Activated T-helper 2 cell treated with anti-CD3 and anti-CD28 coated beads, Interferon-gamma antibody, Interleukin-2, Interleukin-4, amounts not matched to agents 10 μg/mL and 5 μg/mL and 100 μg/mL, durations not matched to agents 14 hours and 24 hours and 36 hours (primary cell): ENCODE measurements at regions of chr18 and their contacts with region 1.

Region 1: GRCh38 chr18:63320046-63320689 is 599 bp upstream of the BCL2 start:
- DNase-seq: peak; percentile 84
- H3K4me3 Mint-ChIP-seq: peak overlapping the region; percentile 80
- H3K27ac Mint-ChIP-seq: peak overlapping the region; percentile 86
- H3K4me1 Mint-ChIP-seq: peaks cover 27% of the 10 kb centered on the region
- H3K27me3 Mint-ChIP-seq: no peaks in the 10 kb centered on the region

Region 2: GRCh38 chr18:62844850-62845643 is 475.1 kb before region 1 on chr18:
- intact Hi-C with region 1: loop called (anchors 10 kb)
- DNase-seq: peak; percentile 20
- H3K4me3 Mint-ChIP-seq: peak overlapping the region; percentile 70
- H3K27ac Mint-ChIP-seq: peak overlapping the region; percentile 90
- H3K4me1 Mint-ChIP-seq: peaks cover 54% of the 10 kb centered on the region
- H3K27me3 Mint-ChIP-seq: no peaks in the 10 kb centered on the region

Region 3: DNA sequence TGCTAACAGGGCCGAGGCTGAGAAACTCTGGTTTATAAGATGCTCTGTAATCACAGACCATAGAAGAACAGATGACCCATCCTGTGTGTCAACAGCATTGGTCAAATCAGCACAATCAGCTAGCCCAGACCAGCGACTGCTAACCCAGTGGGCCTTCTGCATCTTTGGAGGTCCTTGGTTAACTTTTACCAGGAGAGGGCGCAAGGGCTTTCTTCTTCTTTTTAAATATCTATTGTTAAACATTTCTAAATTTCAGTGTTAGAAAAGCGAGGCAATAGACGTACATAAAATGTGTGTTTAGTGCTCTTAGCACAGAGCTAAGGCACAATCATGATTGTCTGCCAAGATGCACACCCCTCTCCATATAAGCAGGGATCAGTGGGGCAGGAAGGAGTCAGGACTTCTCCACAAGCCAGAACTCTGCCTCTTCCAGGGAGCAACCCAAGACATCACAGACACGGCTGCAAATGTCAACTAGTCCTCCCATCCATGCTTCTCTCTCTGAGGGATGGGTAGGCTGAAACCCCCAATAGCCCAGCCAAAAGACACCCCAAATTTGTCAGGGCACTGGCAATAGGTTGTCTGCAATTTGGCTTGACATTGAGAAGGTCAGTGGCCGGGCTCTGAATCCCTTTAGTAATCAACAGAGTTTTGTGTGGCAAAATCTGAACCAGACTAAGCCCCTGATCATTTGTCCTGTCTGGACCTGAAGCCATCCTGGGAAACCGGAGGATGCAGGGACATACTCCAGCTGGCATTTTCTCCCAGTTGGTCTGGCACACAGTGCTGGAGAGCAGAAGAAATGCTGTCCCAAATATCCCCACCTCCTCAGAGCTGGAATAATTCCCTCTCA is 188.8 kb before region 1 on chr18:
- intact Hi-C with region 1: loop called (anchors 1 kb)
- DNase-seq: no peak
- H3K4me3 Mint-ChIP-seq: no peak overlapping the region
- H3K27ac Mint-ChIP-seq: no peak overlapping the region
- H3K4me1 Mint-ChIP-seq: peaks cover 37% of the 10 kb centered on the region
- H3K27me3 Mint-ChIP-seq: no peaks in the 10 kb centered on the region

Region 4: DNA sequence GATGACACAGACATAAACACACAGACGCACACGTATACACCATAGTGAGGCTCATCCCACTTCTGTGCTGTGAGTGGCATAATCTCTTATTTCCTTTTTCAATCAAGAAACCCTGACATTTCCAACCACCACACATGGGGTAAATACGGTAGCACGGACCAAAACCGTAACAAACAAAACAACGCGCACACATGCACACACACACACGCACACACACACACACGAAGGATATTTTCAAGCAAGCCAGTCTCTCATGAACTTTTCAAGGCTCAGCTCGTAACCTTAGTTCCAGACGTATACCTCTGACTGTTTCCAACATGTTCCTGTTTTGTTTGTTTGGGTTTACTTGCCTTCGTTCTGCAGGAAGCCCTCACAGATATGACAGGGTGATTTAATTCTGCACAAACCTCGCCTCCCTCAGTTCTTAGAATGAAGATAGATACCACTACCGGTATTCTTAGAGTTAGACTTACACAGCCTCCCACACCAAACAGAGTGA is 120.4 kb before region 1 on chr18:
- intact Hi-C with region 1: loop called (anchors 1 kb)
- DNase-seq: peak; percentile 56
- H3K4me3 Mint-ChIP-seq: no peak overlapping the region
- H3K27ac Mint-ChIP-seq: no peak overlapping the region
- H3K4me1 Mint-ChIP-seq: peaks cover 30% of the 10 kb centered on the region
- H3K27me3 Mint-ChIP-seq: no peaks in the 10 kb centered on the region

Region 5: GRCh38 chr18:63253428-63254372 is 66.5 kb before region 1 on chr18:
- intact Hi-C with region 1: no loop called
- DNase-seq: no peak
- H3K4me3 Mint-ChIP-seq: peak overlapping the region; percentile 5
- H3K27ac Mint-ChIP-seq: peak overlapping the region; percentile 52
- H3K4me1 Mint-ChIP-seq: peaks cover 60% of the 10 kb centered on the region
- H3K27me3 Mint-ChIP-seq: no peaks in the 10 kb centered on the region

Region 6: GRCh38 chr18:63299837-63300745 is 20.1 kb before region 1 on chr18:
- intact Hi-C with region 1: loop called (anchors 1 kb)
- DNase-seq: no peak
- H3K4me3 Mint-ChIP-seq: peak overlapping the region; percentile 61
- H3K27ac Mint-ChIP-seq: peak overlapping the region; percentile 94
- H3K4me1 Mint-ChIP-seq: peaks cover 79% of the 10 kb centered on the region
- H3K27me3 Mint-ChIP-seq: no peaks in the 10 kb centered on the region

Region 7: GRCh38 chr18:63439334-63439733 is 119.2 kb after region 1 on chr18:
- intact Hi-C with region 1: loop called (anchors 2 kb)
- DNase-seq: no peak
- H3K4me3 Mint-ChIP-seq: no peak overlapping the region
- H3K27ac Mint-ChIP-seq: no peak overlapping the region
- H3K4me1 Mint-ChIP-seq: peaks cover 4% of the 10 kb centered on the region
- H3K27me3 Mint-ChIP-seq: peaks cover 23% of the 10 kb centered on the region